Activated CD4-positive, alpha-beta memory T cell treated with anti-CD3 and anti-CD28 coated beads for 36 hours (primary cell): ENCODE measurements at regions of chr17 and their contacts with region 1.

Region 1: DNA sequence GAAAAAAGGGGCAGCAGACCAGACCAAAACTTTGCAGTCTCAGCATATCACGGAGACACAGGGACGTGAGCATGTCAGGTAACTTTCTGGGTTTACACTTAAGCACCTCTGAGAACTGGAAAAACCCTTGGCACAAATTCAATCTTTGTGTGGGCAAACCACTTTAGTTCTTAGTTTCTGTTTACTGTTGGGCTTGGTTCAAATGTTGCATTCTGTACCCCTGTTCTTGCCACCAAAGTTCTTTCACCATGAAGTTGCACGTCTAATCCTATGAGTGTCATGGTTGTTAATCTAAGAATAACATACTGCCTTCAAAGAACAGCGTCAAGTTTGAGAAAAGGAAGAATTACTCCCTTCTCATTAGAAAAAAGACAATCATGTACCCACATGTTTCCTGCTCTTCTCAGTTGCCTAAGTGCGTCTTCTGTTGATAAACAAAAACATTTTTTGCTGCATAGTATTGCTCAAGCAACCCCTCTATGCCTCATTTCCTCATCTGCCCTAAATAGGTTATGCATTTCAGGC is 11.6 kb downstream of the KRT33A start:
- DNase-seq: peak; percentile 43
- H3K4me3 Mint-ChIP-seq: no peak overlapping the region
- H3K27ac Mint-ChIP-seq: peak overlapping the region; percentile 68
- H3K4me1 Mint-ChIP-seq: peaks cover 80% of the 10 kb centered on the region
- H3K27me3 Mint-ChIP-seq: peaks cover 1% of the 10 kb centered on the region

Region 2: GRCh38 chr17:40915199-40915661 is 423.8 kb before region 1 on chr17:
- CTCF ChIA-PET with region 1: no interaction called
- POLR2A ChIA-PET with region 1: no interaction called
- intact Hi-C with region 1: loop called (anchors 5 kb)
- DNase-seq: no peak
- H3K4me3 Mint-ChIP-seq: no peak overlapping the region
- H3K27ac Mint-ChIP-seq: no peak overlapping the region
- H3K4me1 Mint-ChIP-seq: peaks cover 7% of the 10 kb centered on the region
- H3K27me3 Mint-ChIP-seq: peaks cover 3% of the 10 kb centered on the region

Region 3: DNA sequence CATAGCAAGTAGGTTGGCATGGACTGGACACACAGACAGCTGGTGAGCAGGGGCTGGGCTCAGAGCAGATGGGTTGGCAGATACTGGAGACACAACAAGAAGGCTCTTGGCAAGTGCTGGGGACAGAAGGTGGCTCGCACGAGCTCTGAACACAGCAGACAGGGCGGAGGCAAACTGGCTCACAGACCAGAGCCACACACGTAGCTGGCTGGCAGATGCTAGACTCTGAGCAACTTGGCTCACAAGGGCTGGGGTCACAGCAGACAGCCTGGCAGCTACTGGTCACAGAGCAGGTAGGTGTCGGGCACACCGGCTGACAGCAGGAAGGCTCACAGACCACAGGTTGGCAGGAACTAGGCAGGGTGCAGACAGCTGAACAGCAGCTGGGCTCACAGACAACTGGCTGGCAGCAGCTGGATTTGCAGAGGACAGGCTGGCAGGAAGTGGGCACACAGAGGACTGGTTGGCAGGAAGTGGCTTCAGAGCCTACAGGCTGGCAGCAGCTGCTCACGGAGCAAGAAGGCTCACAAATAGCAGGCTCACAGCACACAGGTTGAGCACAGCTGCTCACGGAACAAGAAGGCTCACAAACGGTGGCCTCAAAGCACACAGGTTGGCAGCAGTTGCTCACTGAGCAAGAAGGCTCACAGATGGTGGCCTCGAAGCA is 30.6 kb before region 1 on chr17:
- CTCF ChIA-PET with region 1: no interaction called
- POLR2A ChIA-PET with region 1: no interaction called
- intact Hi-C with region 1: loop called (anchors 2 kb)
- DNase-seq: peak; percentile 80
- H3K4me3 Mint-ChIP-seq: peak overlapping the region; percentile 55
- H3K27ac Mint-ChIP-seq: peak overlapping the region; percentile 82
- H3K4me1 Mint-ChIP-seq: peaks cover 46% of the 10 kb centered on the region
- H3K27me3 Mint-ChIP-seq: no peaks in the 10 kb centered on the region

Region 4: DNA sequence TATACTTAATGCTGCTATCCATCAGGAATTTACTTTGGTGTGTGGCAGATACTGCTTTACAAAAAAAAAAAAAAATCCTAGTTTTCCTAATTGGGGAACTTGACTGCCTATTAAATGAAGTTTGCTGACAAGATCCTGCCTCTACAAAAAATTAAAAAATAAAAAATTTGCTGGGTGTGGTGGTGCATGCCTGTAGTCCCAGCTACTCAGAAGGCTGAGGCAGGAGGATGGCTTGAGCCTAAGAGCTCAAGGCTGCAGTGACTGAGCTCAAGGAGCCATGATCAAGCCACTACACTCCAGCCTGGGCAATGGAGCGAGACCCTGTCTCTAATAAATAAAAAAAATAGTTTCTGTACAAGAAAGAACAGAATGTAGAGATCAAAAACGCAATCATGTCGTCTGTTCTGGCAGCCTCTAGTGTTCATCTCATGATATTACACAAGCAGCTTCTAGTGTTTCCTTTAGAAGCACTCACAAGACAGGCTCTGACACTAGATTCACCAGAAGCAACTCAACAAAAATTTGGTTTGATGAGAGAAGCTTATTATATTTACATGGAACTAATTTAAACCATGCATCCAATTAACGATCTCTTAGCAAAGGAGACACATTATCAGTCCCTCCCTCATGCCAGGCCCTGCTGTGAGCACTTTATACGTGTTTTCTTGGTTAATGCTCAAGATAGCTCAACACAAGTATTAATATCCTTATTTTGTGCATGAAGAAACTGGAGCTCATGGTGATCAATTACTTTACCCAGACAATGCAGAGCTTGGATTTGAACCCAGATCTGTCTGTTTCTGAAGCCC is 16.7 kb before region 1 on chr17:
- CTCF ChIA-PET with region 1: interaction called, 10 read pairs
- POLR2A ChIA-PET with region 1: no interaction called
- intact Hi-C with region 1: no loop called
- DNase-seq: no peak
- H3K4me3 Mint-ChIP-seq: no peak overlapping the region
- H3K27ac Mint-ChIP-seq: no peak overlapping the region
- H3K4me1 Mint-ChIP-seq: peaks cover 39% of the 10 kb centered on the region
- H3K27me3 Mint-ChIP-seq: no peaks in the 10 kb centered on the region

Region 5: GRCh38 chr17:41403798-41404671 is 65.0 kb after region 1 on chr17:
- CTCF ChIA-PET with region 1: interaction called, 10 read pairs
- POLR2A ChIA-PET with region 1: interaction called, 6 read pairs
- intact Hi-C with region 1: loop called (anchors 1 kb)
- DNase-seq: peak; percentile 84
- H3K4me3 Mint-ChIP-seq: peak overlapping the region; percentile 17
- H3K27ac Mint-ChIP-seq: peak overlapping the region; percentile 86
- H3K4me1 Mint-ChIP-seq: peaks cover 42% of the 10 kb centered on the region
- H3K27me3 Mint-ChIP-seq: no peaks in the 10 kb centered on the region

Region 6: DNA sequence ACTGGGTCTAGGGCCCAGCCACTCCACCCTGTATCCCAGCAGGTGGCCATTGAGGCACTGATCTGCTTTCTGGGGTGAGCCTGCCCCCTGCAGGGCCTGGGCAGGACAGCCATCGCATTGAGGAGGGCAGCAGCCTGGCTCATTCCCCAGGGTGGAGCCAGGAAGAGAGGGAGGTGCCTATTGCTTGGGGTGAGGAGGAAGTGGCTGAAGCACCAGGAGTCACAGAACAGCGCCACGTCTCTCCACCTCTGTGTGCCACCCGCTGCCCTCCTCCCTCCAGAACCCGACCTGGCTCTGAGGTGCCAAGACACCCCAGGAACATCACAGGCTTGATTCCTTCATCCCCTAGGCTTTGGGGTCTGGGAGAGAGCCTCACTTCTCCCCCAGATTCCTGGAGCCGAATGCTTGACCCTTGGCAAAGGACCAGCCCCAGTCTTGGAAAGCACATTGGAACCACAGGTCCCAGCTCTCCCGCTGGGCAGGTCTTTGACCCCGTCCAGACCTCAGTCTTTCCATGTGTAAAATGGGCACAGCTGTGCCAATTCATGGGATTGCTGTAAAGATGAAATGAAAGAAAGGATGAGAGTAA is 157.9 kb after region 1 on chr17:
- CTCF ChIA-PET with region 1: no interaction called
- POLR2A ChIA-PET with region 1: no interaction called
- intact Hi-C with region 1: loop called (anchors 5 kb)
- DNase-seq: peak; percentile 89
- H3K4me3 Mint-ChIP-seq: no peak overlapping the region
- H3K27ac Mint-ChIP-seq: no peak overlapping the region
- H3K4me1 Mint-ChIP-seq: peaks cover 12% of the 10 kb centered on the region
- H3K27me3 Mint-ChIP-seq: no peaks in the 10 kb centered on the region

Region 7: GRCh38 chr17:41521574-41522261 is 182.7 kb after region 1 on chr17:
- CTCF ChIA-PET with region 1: no interaction called
- POLR2A ChIA-PET with region 1: no interaction called
- intact Hi-C with region 1: no loop called
- DNase-seq: no peak
- H3K4me3 Mint-ChIP-seq: no peak overlapping the region
- H3K27ac Mint-ChIP-seq: no peak overlapping the region
- H3K4me1 Mint-ChIP-seq: no peaks in the 10 kb centered on the region
- H3K27me3 Mint-ChIP-seq: peaks cover 6% of the 10 kb centered on the region